ENCODE measurements at regions of chr15 and their contacts with region 1.

Region 1: GRCh38 chr15:50116473-50116872 is 2.6 kb downstream of the ATP8B4 start:
- DNase-seq: no peak
- H3K4me3 ChIP-seq: no peak overlapping the region
- H3K27ac ChIP-seq: no peak overlapping the region
- H3K4me1 ChIP-seq: no peaks in the 10 kb centered on the region
- H3K27me3 ChIP-seq: no peaks in the 10 kb centered on the region
- CTCF ChIP-seq: no peak
- POLR2A ChIP-seq: no peak

Region 2: DNA sequence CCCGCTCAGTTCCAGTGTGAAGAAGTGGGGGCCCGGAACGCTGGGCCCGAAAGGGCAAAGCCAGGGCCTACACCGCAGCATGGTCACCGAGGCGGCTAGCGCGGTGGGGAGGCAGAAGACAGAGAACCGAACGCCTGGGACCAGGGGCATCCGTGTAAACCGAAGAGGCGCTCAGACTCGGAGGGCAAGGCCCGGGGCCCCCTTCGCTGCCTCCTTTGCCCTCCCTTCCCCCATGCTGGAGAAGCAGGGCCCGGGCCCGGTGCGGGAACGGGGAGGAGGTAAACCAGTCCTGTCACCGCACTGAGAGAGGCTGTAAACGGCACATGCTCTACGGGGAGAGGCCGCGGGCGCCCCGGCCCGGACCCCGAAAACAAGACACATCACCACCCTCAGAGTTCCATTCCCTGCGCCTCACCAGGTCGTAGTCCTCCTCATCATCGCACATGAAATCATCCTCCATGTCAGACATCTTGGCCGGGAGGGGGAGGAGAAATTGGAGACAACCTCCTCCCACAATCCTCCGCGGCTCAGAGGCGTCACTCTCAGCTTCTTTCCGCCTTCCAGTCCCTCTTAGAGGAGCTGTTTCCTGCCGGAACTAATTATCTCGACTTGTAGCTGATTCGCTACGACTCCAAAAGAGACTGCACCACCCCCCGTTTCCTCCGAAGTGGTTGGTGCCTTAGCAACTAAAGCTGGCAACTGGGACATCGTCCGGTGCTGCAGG is 961.2 kb before region 1 on chr15 and contains the start of gene COPS2:
- intact Hi-C with region 1: loop called (anchors 10 kb)
- DNase-seq: peak; percentile 91 to 95
- H3K4me3 ChIP-seq: peak within 1 kb of the TSS; percentile 95 to 100 (median 99)
- H3K27ac ChIP-seq: peak within 1 kb of the TSS; percentile 93 to 97
- H3K4me1 ChIP-seq: peaks cover 0 to 7% of the 10 kb centered on the region in 2 donors
- H3K27me3 ChIP-seq: no peaks in the 10 kb centered on the region
- CTCF ChIP-seq: peak in 1 of 3 donors; percentile 19
- POLR2A ChIP-seq: no peak
- total RNA-seq, gene COPS2: 59.3 to 96.8 (median 75.5) TPM

Region 3: DNA sequence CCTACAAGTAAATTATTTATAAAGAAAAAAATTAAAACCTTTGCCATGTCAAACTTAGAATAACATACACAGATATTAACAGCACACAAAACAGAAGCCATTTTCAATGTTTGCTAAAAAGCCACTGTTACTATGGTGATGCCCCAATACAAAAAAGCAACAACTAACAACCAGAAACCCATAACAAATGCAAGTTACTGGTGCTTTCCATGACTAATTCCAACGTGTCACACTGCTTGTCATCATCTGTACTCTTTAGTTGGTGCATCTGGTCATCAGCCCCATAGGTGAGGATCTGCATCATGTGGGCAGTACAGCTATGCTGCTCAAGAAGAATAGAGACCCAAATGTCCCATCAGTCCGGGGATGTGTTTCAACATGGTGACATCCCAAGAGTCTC is 50.3 kb before region 1 on chr15:
- intact Hi-C with region 1: no loop called
- DNase-seq: no peak
- H3K4me3 ChIP-seq: no peak overlapping the region
- H3K27ac ChIP-seq: no peak overlapping the region
- H3K4me1 ChIP-seq: no peaks in the 10 kb centered on the region
- H3K27me3 ChIP-seq: no peaks in the 10 kb centered on the region
- CTCF ChIP-seq: no peak
- POLR2A ChIP-seq: no peak

Region 4: DNA sequence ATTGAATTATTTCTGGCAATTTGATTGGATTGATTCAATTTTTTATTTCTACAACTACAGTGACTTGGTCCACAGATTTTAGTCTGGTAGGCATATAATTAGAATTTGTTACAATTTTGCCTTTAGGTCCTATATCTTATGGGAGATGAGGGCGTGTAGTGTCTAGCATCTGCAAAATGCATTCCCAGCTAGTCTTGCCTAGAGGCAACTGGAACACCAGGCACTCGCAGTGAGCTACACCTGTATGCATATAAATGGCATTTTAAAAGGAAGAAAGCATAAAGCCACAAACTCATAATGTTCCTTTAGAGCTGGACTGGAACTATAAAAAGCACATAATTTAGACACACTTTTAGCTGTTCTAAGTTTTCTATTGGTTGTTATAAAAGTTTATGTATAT is 666.9 kb after region 1 on chr15:
- intact Hi-C with region 1: loop called (anchors 5 kb)
- DNase-seq: no peak
- H3K4me3 ChIP-seq: no peak overlapping the region
- H3K27ac ChIP-seq: no peak overlapping the region
- H3K4me1 ChIP-seq: no peaks in the 10 kb centered on the region
- H3K27me3 ChIP-seq: no peaks in the 10 kb centered on the region
- CTCF ChIP-seq: no peak
- POLR2A ChIP-seq: no peak

Region 5: DNA sequence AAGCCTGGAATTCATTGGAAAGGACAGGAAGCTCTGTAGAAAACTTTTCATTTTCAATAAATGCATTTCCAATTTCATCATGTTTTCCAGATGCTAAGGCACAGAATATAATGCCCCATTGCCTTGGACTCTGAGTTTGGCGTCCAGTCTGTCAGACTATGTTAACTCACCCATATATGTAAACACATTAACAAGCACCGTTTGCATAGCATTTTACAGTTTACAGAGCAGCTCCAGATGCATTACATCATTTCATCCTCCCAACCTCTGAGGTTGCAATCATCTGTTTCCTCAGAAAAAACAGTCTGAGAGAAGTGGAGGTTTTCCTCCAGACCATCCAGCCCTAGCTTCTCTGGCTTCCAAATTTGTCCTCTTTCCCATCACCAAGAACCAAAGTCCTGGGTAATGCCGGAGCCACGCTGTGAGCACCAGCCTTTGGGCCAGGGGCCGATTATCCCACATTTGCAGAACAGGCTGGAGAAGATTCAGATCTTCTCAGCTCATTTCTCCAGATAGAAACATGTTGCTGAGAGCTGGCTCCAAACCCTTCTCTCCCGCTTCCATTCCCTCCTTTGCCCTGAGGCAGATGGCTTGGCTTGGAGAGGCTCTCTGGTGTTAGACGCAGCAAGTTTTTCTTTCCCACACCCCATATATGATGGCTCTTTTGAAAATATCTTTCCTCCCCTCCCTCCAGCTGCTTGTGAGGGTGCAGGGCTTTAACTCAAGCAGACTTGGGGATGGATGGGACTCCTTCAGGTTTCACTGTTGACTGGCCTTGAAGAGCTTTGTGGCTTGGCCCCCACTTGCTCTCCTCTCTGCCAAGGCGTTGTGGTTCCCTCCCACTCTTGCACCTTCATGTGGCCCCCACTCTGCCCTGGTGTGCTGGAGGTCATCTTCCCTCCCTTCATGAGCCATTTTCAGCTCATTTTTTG is 1196.0 kb after region 1 on chr15:
- intact Hi-C with region 1: no loop called
- DNase-seq: no peak
- H3K4me3 ChIP-seq: no peak overlapping the region
- H3K27ac ChIP-seq: peak overlapping the region in 1 of 2 donors; percentile 72
- H3K4me1 ChIP-seq: no peaks in the 10 kb centered on the region
- H3K27me3 ChIP-seq: no peaks in the 10 kb centered on the region
- CTCF ChIP-seq: no peak
- POLR2A ChIP-seq: no peak

Measured in breast epithelium (tissue), 4 donors.